GM12878 (cell line): ENCODE measurements at regions of chr17 and their contacts with region 1.

Region 1: DNA sequence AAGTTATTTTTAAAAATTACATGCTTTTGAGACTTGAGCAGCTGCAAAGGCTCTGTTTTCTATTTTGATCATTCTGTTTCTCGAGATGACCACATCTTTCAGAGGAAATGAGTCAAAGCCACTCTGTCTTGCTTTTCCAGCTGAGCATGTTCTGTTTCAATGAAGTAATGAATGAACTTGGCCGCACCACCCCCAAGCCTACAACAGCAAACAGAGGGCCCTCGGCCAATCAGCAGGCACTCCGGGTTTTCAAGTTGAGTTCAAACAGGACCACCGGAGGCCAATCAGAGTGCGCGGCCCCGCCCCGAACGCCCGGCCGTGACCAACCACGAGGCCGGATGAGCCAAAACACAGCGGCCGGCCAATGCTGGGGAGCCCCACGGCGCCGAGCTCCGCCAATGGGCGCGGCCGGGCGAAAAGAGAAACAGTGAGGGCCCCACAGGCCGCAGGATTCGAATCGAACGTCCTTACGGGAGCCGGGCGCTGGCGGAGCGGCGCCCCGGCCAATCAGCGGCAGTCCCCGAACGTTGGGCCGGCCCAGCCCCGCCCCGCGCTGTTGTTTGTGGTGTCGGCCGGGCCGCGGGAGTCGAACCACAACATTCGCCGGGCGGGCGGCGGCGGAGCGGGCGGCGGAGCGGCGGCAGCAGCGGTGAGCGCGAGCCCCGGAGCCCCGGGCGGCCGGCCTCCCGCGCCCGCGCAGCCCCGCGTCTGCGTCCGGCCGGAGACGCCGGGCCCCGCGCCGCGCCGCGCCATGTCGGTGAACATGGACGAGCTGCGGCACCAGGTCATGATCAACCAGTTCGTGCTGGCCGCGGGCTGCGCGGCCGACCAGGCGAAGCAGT is at the start of gene UBALD2:
- DNase-seq: peak; percentile 99
- ATAC-seq: peak; percentile 81
- H3K4me3 ChIP-seq: peak within 1 kb of the TSS; percentile 84
- H3K27ac ChIP-seq: peak within 1 kb of the TSS; percentile 99
- H3K4me1 ChIP-seq: peaks cover 56% of the 10 kb centered on the region
- H3K27me3 ChIP-seq: no peaks in the 10 kb centered on the region
- CTCF ChIP-seq: no peak
- EP300 ChIP-seq: peak; percentile 91 to 94
- POLR2A ChIP-seq: peak; percentile 85; the same call in 1 of the 2 replicates
- RAD21 ChIP-seq: 0 out of 2 replicates have a peak, but pooled peaks have one; percentile 1
- polyA plus RNA-seq, gene UBALD2: 4.4 to 16.4 TPM

Region 2: GRCh38 chr17:76121932-76122430 is 143.0 kb before region 1 on chr17:
- CTCF ChIA-PET with region 1: interaction called, 7 read pairs
- POLR2A ChIA-PET with region 1: interaction called, 6 read pairs
- RAD21 ChIA-PET with region 1: interaction called, 75 read pairs
- SMC1A ChIA-PET with region 1: interaction called, 63 read pairs
- in situ Hi-C with region 1: no loop called
- intact Hi-C with region 1: no loop called
- DNase-seq: no peak
- ATAC-seq: peak; percentile 9
- H3K4me3 ChIP-seq: peak overlapping the region; percentile 25; the same call in 1 of the 2 replicates
- H3K27ac ChIP-seq: no peak overlapping the region
- H3K4me1 ChIP-seq: peaks cover 6% of the 10 kb centered on the region
- H3K27me3 ChIP-seq: no peaks in the 10 kb centered on the region
- CTCF ChIP-seq: no peak
- EP300 ChIP-seq: no peak
- POLR2A ChIP-seq: no peak
- RAD21 ChIP-seq: no peak

Region 3: GRCh38 chr17:76191896-76192295 is 73.1 kb before region 1 on chr17:
- CTCF ChIA-PET with region 1: interaction called, 160 read pairs
- POLR2A ChIA-PET with region 1: interaction called, 427 read pairs
- RAD21 ChIA-PET with region 1: interaction called, 419 read pairs
- SMC1A ChIA-PET with region 1: interaction called, 152 read pairs
- in situ Hi-C with region 1: loop called (anchors 5 kb)
- intact Hi-C with region 1: loop called (anchors 2 kb)
- DNase-seq: peak; percentile 85
- ATAC-seq: peak; percentile 84
- H3K4me3 ChIP-seq: no peak overlapping the region
- H3K27ac ChIP-seq: peak overlapping the region; percentile 81
- H3K4me1 ChIP-seq: peaks cover 44% of the 10 kb centered on the region
- H3K27me3 ChIP-seq: no peaks in the 10 kb centered on the region
- CTCF ChIP-seq: no peak
- EP300 ChIP-seq: peak; percentile 53 to 80; a peak in 3 of 4 replicates
- POLR2A ChIP-seq: no peak
- RAD21 ChIP-seq: no peak

Region 4: GRCh38 chr17:76232342-76232741 is 32.6 kb before region 1 on chr17:
- CTCF ChIA-PET with region 1: interaction called, 6 read pairs
- POLR2A ChIA-PET with region 1: interaction called, 21 read pairs
- RAD21 ChIA-PET with region 1: interaction called, 26 read pairs
- SMC1A ChIA-PET with region 1: interaction called, 61 read pairs
- in situ Hi-C with region 1: no loop called
- intact Hi-C with region 1: loop called (anchors 5 kb)
- DNase-seq: no peak
- ATAC-seq: no peak
- H3K4me3 ChIP-seq: no peak overlapping the region
- H3K27ac ChIP-seq: no peak overlapping the region
- H3K4me1 ChIP-seq: peaks cover 9% of the 10 kb centered on the region
- H3K27me3 ChIP-seq: no peaks in the 10 kb centered on the region
- CTCF ChIP-seq: no peak
- EP300 ChIP-seq: no peak
- POLR2A ChIP-seq: no peak
- RAD21 ChIP-seq: no peak

Region 5: DNA sequence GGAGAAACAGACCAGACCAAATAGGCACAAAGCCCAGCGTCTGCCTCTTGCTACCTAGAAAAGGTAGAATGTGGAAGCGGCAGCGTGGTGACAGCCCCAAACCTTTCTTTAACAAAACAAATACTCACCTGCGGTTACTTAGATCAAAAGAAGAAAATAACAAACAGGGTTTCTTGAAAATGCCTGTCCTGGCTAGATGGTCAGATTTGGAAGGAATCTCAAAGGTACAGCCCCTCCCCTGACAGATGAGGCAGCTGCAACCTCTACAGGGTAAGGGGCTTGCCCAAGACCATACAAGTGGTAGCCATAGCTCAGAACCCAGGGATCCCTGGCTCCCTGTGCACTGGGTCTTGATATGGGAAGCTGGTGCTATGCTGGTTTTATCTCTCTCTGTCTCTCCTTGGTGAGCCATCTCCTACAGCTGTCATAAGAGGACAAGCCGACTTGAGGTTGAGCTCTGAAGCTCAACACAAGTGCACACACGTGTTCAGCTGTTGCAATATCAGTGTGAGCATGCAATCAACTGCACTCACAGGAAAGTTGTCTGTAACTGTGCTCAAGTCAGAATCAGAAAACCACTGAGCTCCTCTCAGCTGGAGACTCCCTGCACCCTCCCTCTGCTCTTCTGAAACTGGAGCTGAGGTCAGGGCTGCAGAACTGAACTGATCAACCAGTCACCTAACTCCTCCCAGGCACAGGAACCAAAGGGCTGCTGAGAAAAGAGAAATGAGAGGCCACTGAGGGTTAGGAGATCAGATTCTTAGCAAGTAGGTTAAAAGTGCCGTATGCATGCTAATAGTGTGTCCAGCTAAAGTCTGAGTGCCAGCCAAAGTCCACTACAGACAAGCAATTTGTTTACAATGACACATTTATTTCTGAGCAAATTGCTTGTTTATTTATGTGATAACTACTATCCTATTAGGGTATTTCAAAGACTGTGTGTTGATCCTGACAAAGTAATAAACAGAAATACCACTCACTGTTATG is 18.6 kb before region 1 on chr17:
- CTCF ChIA-PET with region 1: interaction called, 82 read pairs
- POLR2A ChIA-PET with region 1: interaction called, 341 read pairs
- RAD21 ChIA-PET with region 1: interaction called, 124 read pairs
- SMC1A ChIA-PET with region 1: interaction called, 226 read pairs
- in situ Hi-C with region 1: no loop called
- intact Hi-C with region 1: loop called (anchors 2 kb)
- DNase-seq: peak; percentile 98
- ATAC-seq: peak; percentile 100
- H3K4me3 ChIP-seq: no peak overlapping the region
- H3K27ac ChIP-seq: peak overlapping the region; percentile 80
- H3K4me1 ChIP-seq: peaks cover 34% of the 10 kb centered on the region
- H3K27me3 ChIP-seq: no peaks in the 10 kb centered on the region
- CTCF ChIP-seq: no peak
- EP300 ChIP-seq: peak; percentile 68 to 81
- POLR2A ChIP-seq: peak; percentile 83
- RAD21 ChIP-seq: 0 out of 2 replicates have a peak, but pooled peaks have one; percentile 1

Region 6: GRCh38 chr17:76278952-76279741 is 14.2 kb after region 1 on chr17:
- CTCF ChIA-PET with region 1: interaction called, 16 read pairs
- POLR2A ChIA-PET with region 1: interaction called, 82 read pairs
- RAD21 ChIA-PET with region 1: interaction called, 46 read pairs
- SMC1A ChIA-PET with region 1: interaction called, 59 read pairs
- in situ Hi-C with region 1: no loop called
- intact Hi-C with region 1: no loop called
- DNase-seq: no peak
- ATAC-seq: peak; percentile 96
- H3K4me3 ChIP-seq: no peak overlapping the region
- H3K27ac ChIP-seq: no peak overlapping the region
- H3K4me1 ChIP-seq: no peaks in the 10 kb centered on the region; the same call in 1 of the 2 replicates
- H3K27me3 ChIP-seq: no peaks in the 10 kb centered on the region
- CTCF ChIP-seq: peak; percentile 89 to 97 (median 93)
- EP300 ChIP-seq: no peak
- POLR2A ChIP-seq: no peak
- RAD21 ChIP-seq: peak; percentile 100

Region 7: GRCh38 chr17:78168242-78168902 is 1903.4 kb after region 1 on chr17 and contains the start of gene SYNGR2:
- CTCF ChIA-PET with region 1: no interaction called
- POLR2A ChIA-PET with region 1: no interaction called
- RAD21 ChIA-PET with region 1: no interaction called
- SMC1A ChIA-PET with region 1: no interaction called
- in situ Hi-C with region 1: loop called (anchors 25 kb)
- intact Hi-C with region 1: no loop called
- DNase-seq: no peak
- ATAC-seq: peak; percentile 70
- H3K4me3 ChIP-seq: peak within 1 kb of the TSS; percentile 70
- H3K27ac ChIP-seq: peak within 1 kb of the TSS; percentile 94
- H3K4me1 ChIP-seq: peaks cover 30% of the 10 kb centered on the region
- H3K27me3 ChIP-seq: no peaks in the 10 kb centered on the region
- CTCF ChIP-seq: no peak
- EP300 ChIP-seq: no peak
- POLR2A ChIP-seq: peak; percentile 80
- RAD21 ChIP-seq: no peak
- polyA plus RNA-seq, gene SYNGR2: 4.4 to 28.8 TPM